ENCODE measurements at regions of chr14 and their contacts with region 1.

Region 1: GRCh38 chr14:23631702-23632460 is 4.3 kb upstream of the DHRS2 start:
- DNase-seq: peak; percentile 53 to 83 (median 62)
- ATAC-seq: peak; percentile 83
- H3K4me3 ChIP-seq: peak overlapping the region; percentile 36
- H3K4me3 Mint-ChIP-seq: peak overlapping the region; percentile 58
- H3K27ac ChIP-seq: no peak overlapping the region
- H3K27ac Mint-ChIP-seq: peak overlapping the region; percentile 4
- H3K4me1 ChIP-seq: peaks cover 5% of the 10 kb centered on the region
- H3K4me1 Mint-ChIP-seq: peaks cover 6% of the 10 kb centered on the region
- H3K27me3 ChIP-seq: no peaks in the 10 kb centered on the region
- H3K27me3 Mint-ChIP-seq: no peaks in the 10 kb centered on the region
- CTCF ChIP-seq: peak; percentile 99

Region 2: DNA sequence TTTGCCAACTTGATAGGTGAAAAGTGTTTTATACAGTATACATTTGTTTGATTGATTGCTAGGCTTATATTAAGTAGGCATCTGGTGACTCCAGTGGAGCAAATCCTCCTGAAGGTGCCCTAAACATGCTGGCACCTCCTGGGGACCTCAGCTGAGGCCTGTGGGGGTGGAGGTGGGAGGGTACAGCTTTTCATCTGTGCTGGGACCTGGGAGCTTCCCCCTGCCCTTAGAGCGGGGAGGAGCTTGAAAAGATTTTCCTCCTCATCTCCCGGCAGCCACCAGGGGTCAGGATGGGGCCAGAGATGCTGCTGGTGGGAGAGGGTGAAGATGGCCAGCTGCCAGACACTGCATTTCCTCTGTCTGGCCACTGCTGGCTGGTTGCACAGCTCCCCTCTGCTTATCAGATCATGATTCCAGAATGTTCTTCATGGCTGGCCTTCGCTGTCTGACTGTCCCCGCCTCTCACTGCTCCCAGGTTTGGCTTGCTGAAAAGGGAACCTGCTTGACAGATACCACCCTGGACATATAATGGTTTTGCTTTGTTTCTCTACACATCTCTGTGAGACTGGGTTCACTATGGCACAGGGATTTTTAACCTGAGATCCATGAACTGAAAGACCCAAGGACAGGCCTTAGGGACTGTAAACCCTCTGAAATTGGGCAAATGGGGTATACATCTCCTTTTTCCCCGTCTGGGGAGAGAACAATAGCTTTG is 42.8 kb before region 1 on chr14:
- CTCF ChIA-PET with region 1: interaction called, 7 read pairs
- POLR2A ChIA-PET with region 1: interaction called, 9 read pairs
- intact Hi-C with region 1: loop called (anchors 1 to 5 kb)
- DNase-seq: peak; percentile 71 to 91 (median 74)
- ATAC-seq: peak; percentile 99
- H3K4me3 ChIP-seq: no peak overlapping the region
- H3K4me3 Mint-ChIP-seq: no peak overlapping the region
- H3K27ac ChIP-seq: no peak overlapping the region
- H3K27ac Mint-ChIP-seq: no peak overlapping the region
- H3K4me1 ChIP-seq: peaks cover 11% of the 10 kb centered on the region
- H3K4me1 Mint-ChIP-seq: peaks cover 12% of the 10 kb centered on the region
- H3K27me3 ChIP-seq: no peaks in the 10 kb centered on the region
- H3K27me3 Mint-ChIP-seq: peaks cover 31% of the 10 kb centered on the region
- CTCF ChIP-seq: peak; percentile 87

Region 3: GRCh38 chr14:23929822-23930294 is 298.0 kb after region 1 on chr14:
- CTCF ChIA-PET with region 1: interaction called, 4 read pairs
- POLR2A ChIA-PET with region 1: no interaction called
- intact Hi-C with region 1: loop called (anchors 1 to 5 kb)
- DNase-seq: peak; percentile 65 to 92 (median 84)
- ATAC-seq: peak; percentile 93
- H3K4me3 ChIP-seq: no peak overlapping the region
- H3K4me3 Mint-ChIP-seq: no peak overlapping the region
- H3K27ac ChIP-seq: no peak overlapping the region
- H3K27ac Mint-ChIP-seq: no peak overlapping the region
- H3K4me1 ChIP-seq: peaks cover 4% of the 10 kb centered on the region
- H3K4me1 Mint-ChIP-seq: no peaks in the 10 kb centered on the region
- H3K27me3 ChIP-seq: peaks cover 0 to 6% of the 10 kb centered on the region in 2 experiments
- H3K27me3 Mint-ChIP-seq: peaks cover 6% of the 10 kb centered on the region
- CTCF ChIP-seq: peak; percentile 95

Region 4: GRCh38 chr14:23953464-23954278 is 321.8 kb after region 1 on chr14 and contains the start of gene DHRS4:
- CTCF ChIA-PET with region 1: no interaction called
- POLR2A ChIA-PET with region 1: no interaction called
- intact Hi-C with region 1: loop called (anchors 1 to 2 kb)
- DNase-seq: peak; percentile 67 to 92 (median 78)
- ATAC-seq: peak; percentile 91
- H3K4me3 ChIP-seq: peak within 1 kb of the TSS; percentile 84
- H3K4me3 Mint-ChIP-seq: peak within 1 kb of the TSS; percentile 96
- H3K27ac ChIP-seq: peak within 1 kb of the TSS; percentile 54 to 63
- H3K27ac Mint-ChIP-seq: peak within 1 kb of the TSS; percentile 79
- H3K4me1 ChIP-seq: peaks cover 25% of the 10 kb centered on the region
- H3K4me1 Mint-ChIP-seq: peaks cover 32% of the 10 kb centered on the region
- H3K27me3 ChIP-seq: no peaks in the 10 kb centered on the region
- H3K27me3 Mint-ChIP-seq: no peaks in the 10 kb centered on the region
- CTCF ChIP-seq: peak; percentile 93
- total RNA-seq, gene DHRS4: 6.6 to 6.7 TPM

Region 5: GRCh38 chr14:24100197-24100981 is 468.5 kb after region 1 on chr14:
- CTCF ChIA-PET with region 1: no interaction called
- POLR2A ChIA-PET with region 1: no interaction called
- intact Hi-C with region 1: loop called in 1 of 2 experiments (anchors 5 kb)
- DNase-seq: no peak
- ATAC-seq: no peak
- H3K4me3 ChIP-seq: no peak overlapping the region
- H3K4me3 Mint-ChIP-seq: no peak overlapping the region
- H3K27ac ChIP-seq: no peak overlapping the region
- H3K27ac Mint-ChIP-seq: no peak overlapping the region
- H3K4me1 ChIP-seq: peaks cover 5% of the 10 kb centered on the region
- H3K4me1 Mint-ChIP-seq: peaks cover 13% of the 10 kb centered on the region
- H3K27me3 ChIP-seq: no peaks in the 10 kb centered on the region
- H3K27me3 Mint-ChIP-seq: no peaks in the 10 kb centered on the region
- CTCF ChIP-seq: no peak